PC-9 (cell line): ENCODE measurements at regions of chr18 and their contacts with region 1.

Region 1: GRCh38 chr18:7946734-7947377 is 379.7 kb downstream of the PTPRM start:
- DNase-seq: peak; percentile 64 to 65
- H3K4me3 ChIP-seq: peak overlapping the region; percentile 54
- H3K27ac ChIP-seq: peak overlapping the region; percentile 85
- H3K4me1 ChIP-seq: peaks cover 42% of the 10 kb centered on the region
- H3K27me3 ChIP-seq: no peaks in the 10 kb centered on the region
- CTCF ChIP-seq: no peak

Region 2: DNA sequence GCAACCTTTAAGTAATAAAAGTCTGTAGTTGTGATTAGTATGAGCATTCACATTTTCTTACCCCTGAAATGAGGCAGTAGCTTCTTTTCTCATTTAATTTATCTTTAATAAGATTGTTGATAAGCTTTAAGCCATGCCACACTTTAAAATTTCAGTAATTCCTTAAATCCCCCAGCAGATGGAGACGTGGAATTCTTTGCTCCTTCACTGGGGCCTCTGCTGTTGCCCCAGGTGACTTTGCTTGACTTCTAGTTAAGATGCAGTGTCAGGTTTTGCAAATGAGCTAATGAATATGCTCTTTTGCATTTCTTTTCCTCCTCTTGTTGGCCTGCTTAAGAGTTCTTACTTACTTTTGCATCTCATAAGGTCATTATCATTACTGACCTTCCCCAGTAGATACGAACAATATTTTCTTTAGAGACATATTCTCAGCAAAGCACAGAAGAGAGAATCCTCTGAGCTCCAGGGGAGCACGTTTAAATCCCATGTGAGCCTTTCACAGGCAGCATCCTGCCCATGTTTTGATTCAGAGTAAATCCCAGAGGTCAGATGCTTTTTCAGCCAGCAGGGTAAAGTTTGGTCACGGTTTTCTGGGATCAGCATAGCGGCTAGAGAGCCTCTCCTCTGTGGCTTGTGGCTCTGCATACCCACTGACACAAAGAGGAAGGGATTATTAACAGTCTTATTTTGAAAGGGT is 156.9 kb before region 1 on chr18:
- CTCF ChIA-PET with region 1: interaction called, 3 read pairs
- POLR2A ChIA-PET with region 1: no interaction called
- intact Hi-C with region 1: loop called (anchors 1 kb)
- DNase-seq: peak in 1 of 2 experiments; percentile 25
- H3K4me3 ChIP-seq: no peak overlapping the region
- H3K27ac ChIP-seq: no peak overlapping the region
- H3K4me1 ChIP-seq: no peaks in the 10 kb centered on the region
- H3K27me3 ChIP-seq: no peaks in the 10 kb centered on the region
- CTCF ChIP-seq: peak; percentile 82

Region 3: GRCh38 chr18:7872569-7872968 is 74.3 kb before region 1 on chr18:
- CTCF ChIA-PET with region 1: no interaction called
- POLR2A ChIA-PET with region 1: no interaction called
- intact Hi-C with region 1: loop called (anchors 1 kb)
- DNase-seq: peak; percentile 17 to 84
- H3K4me3 ChIP-seq: no peak overlapping the region; the same call in 1 of the 2 replicates
- H3K27ac ChIP-seq: peak overlapping the region; percentile 89
- H3K4me1 ChIP-seq: peaks cover 47% of the 10 kb centered on the region
- H3K27me3 ChIP-seq: no peaks in the 10 kb centered on the region
- CTCF ChIP-seq: no peak; the same call in 1 of the 2 replicates

Region 4: DNA sequence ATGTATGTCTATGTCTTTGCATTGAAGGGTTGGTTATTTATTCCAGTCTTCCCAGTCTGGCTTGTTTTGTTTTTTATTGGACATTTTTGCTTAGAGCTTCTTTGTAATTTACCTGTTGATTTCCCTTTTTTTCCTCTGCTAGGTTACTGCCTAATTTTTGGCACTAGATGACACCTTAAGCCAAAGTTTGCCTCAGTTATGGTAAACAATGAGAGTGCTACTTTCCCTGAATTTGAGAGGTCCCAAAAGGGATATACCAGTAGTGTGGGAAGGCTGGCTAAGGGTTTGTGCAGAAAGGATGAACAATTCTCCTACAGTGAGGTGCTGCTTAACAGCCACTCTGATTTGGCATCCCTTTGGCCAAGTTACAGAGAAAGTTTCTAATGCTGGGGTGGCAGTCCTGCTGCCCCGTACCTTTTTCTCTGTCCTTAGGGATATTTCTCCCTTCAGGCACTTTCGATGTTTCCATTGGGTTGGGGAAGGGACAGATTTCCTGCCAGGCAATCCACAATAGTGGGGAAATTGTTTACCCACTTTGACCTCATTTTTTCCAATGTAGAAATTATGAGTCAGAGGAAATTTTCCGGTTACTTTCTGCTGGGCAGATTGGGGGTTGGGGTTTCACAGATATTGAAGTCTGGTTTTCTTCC is 24.8 kb before region 1 on chr18:
- CTCF ChIA-PET with region 1: interaction called, 5 read pairs
- POLR2A ChIA-PET with region 1: interaction called, 3 read pairs
- intact Hi-C with region 1: loop called (anchors 1 kb)
- DNase-seq: peak; percentile 41 to 88
- H3K4me3 ChIP-seq: peak overlapping the region; percentile 44; the same call in 1 of the 2 replicates
- H3K27ac ChIP-seq: peak overlapping the region; percentile 100
- H3K4me1 ChIP-seq: peaks cover 51% of the 10 kb centered on the region
- H3K27me3 ChIP-seq: no peaks in the 10 kb centered on the region
- CTCF ChIP-seq: no peak

Region 5: GRCh38 chr18:8121942-8122480 is 175.2 kb after region 1 on chr18:
- CTCF ChIA-PET with region 1: no interaction called
- POLR2A ChIA-PET with region 1: no interaction called
- intact Hi-C with region 1: loop called (anchors 10 kb)
- DNase-seq: peak; percentile 71 to 81
- H3K4me3 ChIP-seq: no peak overlapping the region
- H3K27ac ChIP-seq: peak overlapping the region; percentile 70
- H3K4me1 ChIP-seq: peaks cover 69% of the 10 kb centered on the region
- H3K27me3 ChIP-seq: no peaks in the 10 kb centered on the region
- CTCF ChIP-seq: no peak